Caco-2 (cell line): ENCODE measurements at regions of chr4 and their contacts with region 1.

Region 1: GRCh38 chr4:107183155-107183774 is 147.2 kb upstream of the DKK2 start:
- DNase-seq: peak; percentile 42 to 57
- H3K4me3 ChIP-seq: no peak overlapping the region
- H3K4me3 Mint-ChIP-seq: no peak overlapping the region
- H3K27ac Mint-ChIP-seq: no peak overlapping the region
- H3K4me1 ChIP-seq: no peaks in the 10 kb centered on the region; the same call in 1 of the 2 replicates
- H3K4me1 Mint-ChIP-seq: no peaks in the 10 kb centered on the region
- H3K27me3 ChIP-seq: no peaks in the 10 kb centered on the region
- H3K27me3 Mint-ChIP-seq: no peaks in the 10 kb centered on the region
- CTCF ChIP-seq: peak; percentile 66 to 71

Region 2: DNA sequence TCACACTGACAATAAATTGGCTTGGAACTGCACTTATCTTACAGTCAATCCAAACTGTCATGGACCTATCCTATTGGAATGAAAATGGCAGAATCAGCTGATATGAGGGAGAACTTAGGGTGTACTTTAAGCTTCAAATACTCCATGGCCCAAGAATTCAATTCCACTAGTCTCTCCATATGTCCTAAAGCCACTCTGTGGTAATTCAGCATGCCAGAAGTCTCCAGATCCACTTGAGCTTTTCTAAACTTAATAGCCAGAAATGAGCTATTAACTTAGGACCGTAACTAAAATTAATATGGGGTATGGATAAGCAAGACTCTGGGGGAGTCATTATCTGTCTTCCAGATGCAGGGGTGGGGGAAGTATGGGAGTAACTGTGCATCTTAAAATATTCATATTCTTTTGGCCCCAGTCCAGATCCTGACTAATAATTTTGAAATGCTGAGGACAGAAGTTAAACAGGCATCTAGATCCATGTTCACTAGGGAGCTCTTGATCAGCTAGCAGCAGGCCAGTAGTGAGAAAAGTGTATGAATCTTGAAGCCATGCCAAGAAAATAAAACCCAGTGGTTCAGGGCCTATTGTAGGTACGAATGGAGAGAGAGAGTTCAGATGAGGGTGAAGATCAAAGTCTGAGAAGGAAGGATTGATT is 314.8 kb before region 1 on chr4:
- CTCF ChIA-PET with region 1: no interaction called
- POLR2A ChIA-PET with region 1: no interaction called
- intact Hi-C with region 1: no loop called
- DNase-seq: no peak
- H3K4me3 ChIP-seq: no peak overlapping the region
- H3K4me3 Mint-ChIP-seq: no peak overlapping the region
- H3K27ac Mint-ChIP-seq: no peak overlapping the region
- H3K4me1 ChIP-seq: no peaks in the 10 kb centered on the region
- H3K4me1 Mint-ChIP-seq: no peaks in the 10 kb centered on the region
- H3K27me3 ChIP-seq: no peaks in the 10 kb centered on the region
- H3K27me3 Mint-ChIP-seq: no peaks in the 10 kb centered on the region
- CTCF ChIP-seq: no peak

Region 3: DNA sequence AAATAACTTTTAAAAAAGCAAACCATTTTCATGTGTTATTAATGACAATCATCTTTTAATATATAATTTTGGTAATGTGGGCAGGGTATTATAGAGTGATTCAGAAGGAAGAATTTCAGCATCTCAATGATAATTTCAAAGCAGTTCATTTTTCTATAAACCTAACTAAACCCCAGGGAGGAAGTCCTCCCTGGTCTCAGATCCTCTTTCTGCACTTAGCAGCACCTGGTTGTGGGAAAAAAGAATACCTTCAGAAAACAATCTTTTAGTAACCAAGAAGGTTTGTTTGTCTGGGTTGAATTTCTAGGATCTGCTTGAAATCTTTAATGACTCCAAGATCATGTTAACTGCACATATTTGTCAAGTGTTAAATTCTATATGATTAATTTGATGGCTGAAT is 177.0 kb before region 1 on chr4:
- CTCF ChIA-PET with region 1: no interaction called
- POLR2A ChIA-PET with region 1: no interaction called
- intact Hi-C with region 1: no loop called
- DNase-seq: no peak
- H3K4me3 ChIP-seq: no peak overlapping the region
- H3K4me3 Mint-ChIP-seq: no peak overlapping the region
- H3K27ac Mint-ChIP-seq: no peak overlapping the region
- H3K4me1 ChIP-seq: no peaks in the 10 kb centered on the region
- H3K4me1 Mint-ChIP-seq: no peaks in the 10 kb centered on the region
- H3K27me3 ChIP-seq: no peaks in the 10 kb centered on the region
- H3K27me3 Mint-ChIP-seq: peaks cover 7% of the 10 kb centered on the region
- CTCF ChIP-seq: no peak

Region 4: DNA sequence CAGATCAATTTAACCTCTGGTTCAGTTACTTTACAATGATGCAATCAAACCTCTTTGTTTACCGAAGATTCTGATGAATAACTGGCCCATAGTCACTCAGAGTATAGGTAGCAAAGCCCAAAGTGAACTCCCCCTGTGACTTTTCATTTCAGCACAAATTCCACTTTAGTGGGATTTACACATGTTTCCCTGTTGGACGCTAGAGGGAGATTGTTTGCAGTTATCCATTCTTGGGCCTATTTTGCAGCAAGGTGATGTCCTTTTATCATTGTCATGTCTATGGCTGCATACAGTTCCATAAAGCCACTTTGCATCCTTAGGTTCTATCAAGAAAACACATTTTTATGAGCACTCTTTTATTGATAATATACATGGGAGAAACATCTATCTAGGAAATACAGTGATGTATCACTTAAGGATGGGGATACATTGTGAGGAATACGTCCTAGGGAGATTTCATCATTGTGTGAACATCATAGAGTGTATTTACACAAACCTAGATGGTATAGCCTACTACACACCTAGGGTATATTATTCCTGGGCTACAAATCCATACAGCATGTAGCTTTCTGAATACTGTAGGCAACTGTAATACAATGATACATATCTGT is 132.6 kb before region 1 on chr4:
- CTCF ChIA-PET with region 1: no interaction called
- POLR2A ChIA-PET with region 1: no interaction called
- intact Hi-C with region 1: loop called (anchors 1 kb)
- DNase-seq: peak in 1 of 2 experiments; percentile 11
- H3K4me3 ChIP-seq: no peak overlapping the region
- H3K4me3 Mint-ChIP-seq: no peak overlapping the region
- H3K27ac Mint-ChIP-seq: no peak overlapping the region
- H3K4me1 ChIP-seq: no peaks in the 10 kb centered on the region
- H3K4me1 Mint-ChIP-seq: no peaks in the 10 kb centered on the region
- H3K27me3 ChIP-seq: no peaks in the 10 kb centered on the region
- H3K27me3 Mint-ChIP-seq: no peaks in the 10 kb centered on the region
- CTCF ChIP-seq: peak; percentile 41 to 63

Region 5: GRCh38 chr4:107419052-107419451 is 235.8 kb after region 1 on chr4:
- CTCF ChIA-PET with region 1: no interaction called
- POLR2A ChIA-PET with region 1: no interaction called
- intact Hi-C with region 1: no loop called
- DNase-seq: no peak
- H3K4me3 ChIP-seq: no peak overlapping the region
- H3K4me3 Mint-ChIP-seq: no peak overlapping the region
- H3K27ac Mint-ChIP-seq: no peak overlapping the region
- H3K4me1 ChIP-seq: no peaks in the 10 kb centered on the region
- H3K4me1 Mint-ChIP-seq: no peaks in the 10 kb centered on the region
- H3K27me3 ChIP-seq: no peaks in the 10 kb centered on the region
- H3K27me3 Mint-ChIP-seq: peaks cover 5% of the 10 kb centered on the region
- CTCF ChIP-seq: no peak

Region 6: DNA sequence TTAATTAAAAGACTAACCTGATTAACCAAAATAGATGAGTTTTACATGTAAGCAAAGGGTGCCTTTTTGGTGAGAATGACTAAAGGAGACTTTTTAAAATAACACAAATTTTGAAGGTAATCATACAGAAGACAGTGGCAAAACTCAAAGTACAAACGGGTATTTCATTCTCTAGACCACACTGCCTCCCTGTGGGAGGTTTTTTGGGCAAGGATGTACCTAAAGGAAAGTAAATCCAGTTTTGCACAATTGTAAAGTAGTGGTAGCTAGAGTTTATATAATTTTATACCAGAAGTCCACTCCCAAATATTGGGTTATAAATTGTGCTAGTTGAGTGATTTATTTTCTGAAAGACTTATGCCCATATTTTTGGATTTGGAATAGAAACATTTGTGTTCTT is 335.8 kb after region 1 on chr4:
- CTCF ChIA-PET with region 1: no interaction called
- POLR2A ChIA-PET with region 1: no interaction called
- intact Hi-C with region 1: loop called (anchors 1 kb)
- DNase-seq: peak in 1 of 2 experiments; percentile 29
- H3K4me3 ChIP-seq: no peak overlapping the region
- H3K4me3 Mint-ChIP-seq: no peak overlapping the region
- H3K27ac Mint-ChIP-seq: no peak overlapping the region
- H3K4me1 ChIP-seq: no peaks in the 10 kb centered on the region
- H3K4me1 Mint-ChIP-seq: no peaks in the 10 kb centered on the region
- H3K27me3 ChIP-seq: no peaks in the 10 kb centered on the region
- H3K27me3 Mint-ChIP-seq: no peaks in the 10 kb centered on the region
- CTCF ChIP-seq: peak; percentile 35 to 56